Heart left ventricle (tissue), 16 donors: ENCODE measurements at regions of chr9 and their contacts with region 1.

Region 1: DNA sequence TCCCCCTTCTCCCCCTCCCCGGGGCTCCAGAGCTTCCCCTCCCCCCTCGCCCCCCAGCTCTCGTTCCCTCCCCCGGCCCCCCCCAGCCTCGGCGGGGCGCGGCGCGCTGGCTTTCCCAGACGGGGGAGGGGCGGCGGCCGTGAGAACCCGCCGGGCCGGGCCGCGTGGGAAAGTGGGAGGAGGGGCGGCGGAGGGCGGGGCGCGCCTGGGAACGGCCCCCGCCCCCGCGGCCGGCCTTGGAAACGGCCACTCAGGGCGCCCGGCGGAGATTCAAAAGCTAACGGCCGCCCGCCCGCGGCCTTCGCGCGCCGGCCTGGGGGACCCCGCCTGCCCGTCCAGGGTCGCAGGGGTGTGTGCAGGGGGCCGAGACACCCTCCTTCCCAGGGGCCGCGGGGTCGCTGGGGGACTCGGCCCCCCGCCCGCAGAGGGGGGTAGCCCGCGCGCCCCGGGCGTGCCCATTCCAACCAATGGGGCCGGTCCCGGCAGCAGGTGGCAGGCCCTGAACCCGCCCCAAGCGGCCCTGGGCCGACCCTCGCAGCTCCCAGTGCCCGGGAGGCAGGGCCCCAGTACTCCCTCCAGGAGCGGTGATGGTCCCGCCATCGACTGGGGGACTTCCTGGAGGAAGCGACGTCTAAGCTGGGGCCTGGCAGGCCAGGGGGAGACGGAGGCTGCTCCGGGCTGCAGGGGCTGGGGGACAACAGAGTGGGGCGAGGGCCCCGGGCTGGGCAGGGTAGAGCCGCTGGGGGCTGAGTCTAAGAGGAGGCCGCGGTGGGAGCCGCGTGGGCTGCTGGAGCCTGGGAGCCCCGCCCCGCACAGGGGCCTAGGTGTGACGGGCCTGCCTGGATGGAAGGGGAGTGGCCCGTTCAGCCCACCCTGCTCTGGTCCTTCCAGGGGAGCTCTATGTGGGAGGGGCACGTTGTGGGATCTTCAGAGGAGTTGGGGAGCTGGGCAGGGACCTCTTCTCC is 14.2 kb upstream of the NRARP start:
- DNase-seq: peak; percentile 56 to 83 (median 81)
- ATAC-seq: peak in 2 of 4 donors; percentile 31 to 52
- H3K4me3 ChIP-seq: peak overlapping the region; percentile 20 to 53 (median 46)
- H3K27ac ChIP-seq: peak overlapping the region; percentile 25 to 97 (median 75)
- H3K4me1 ChIP-seq: peaks cover 3 to 78% (median 42%) of the 10 kb centered on the region in 12 donors
- H3K27me3 ChIP-seq: peaks cover 0 to 21% (median 6%) of the 10 kb centered on the region in 9 donors
- CTCF ChIP-seq: no peak
- POLR2A ChIP-seq: no peak

Region 2: DNA sequence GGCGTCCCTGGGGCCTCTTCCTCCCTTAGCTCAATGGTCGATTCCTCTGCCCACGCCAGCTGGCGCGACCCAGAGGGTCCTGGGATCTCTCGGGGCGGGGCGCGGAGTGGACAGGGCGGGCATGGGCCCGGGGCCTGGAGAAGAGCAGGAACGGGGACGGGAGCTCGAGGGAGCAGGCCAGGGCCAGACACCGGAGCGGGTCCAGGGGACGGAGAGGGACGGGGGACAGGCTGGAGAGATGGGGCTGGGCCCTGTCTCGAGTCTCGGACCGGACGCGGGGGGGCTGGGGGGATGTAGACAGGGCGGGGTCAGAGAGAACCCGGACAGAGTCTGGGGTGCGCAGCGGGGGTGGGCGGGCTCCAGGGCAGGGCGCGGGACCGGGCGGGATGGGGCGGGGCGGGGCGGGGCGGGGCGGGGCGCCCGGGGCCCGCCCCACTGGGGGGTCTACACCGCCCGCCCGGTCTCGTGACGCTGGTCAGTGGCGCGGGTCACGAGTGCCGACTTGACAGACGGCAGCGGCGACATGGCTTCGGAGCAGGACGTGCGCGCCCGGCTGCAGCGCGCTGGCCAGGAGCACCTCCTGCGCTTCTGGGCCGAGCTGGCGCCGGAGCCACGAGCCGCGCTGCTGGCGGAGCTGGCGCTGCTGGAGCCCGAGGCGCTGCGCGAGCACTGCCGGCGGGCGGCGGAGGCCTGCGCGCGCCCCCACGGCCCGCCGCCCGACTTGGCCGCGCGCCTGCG is 239.1 kb before region 1 on chr9 and contains the start of gene UAP1L1:
- intact Hi-C with region 1: no loop called
- DNase-seq: peak; percentile 78 to 93 (median 85)
- ATAC-seq: peak; percentile 40 to 74 (median 64)
- H3K4me3 ChIP-seq: peak within 1 kb of the TSS; percentile 57 to 85 (median 70)
- H3K27ac ChIP-seq: peak within 1 kb of the TSS in 11 of 12 donors; percentile 18 to 83 (median 59)
- H3K4me1 ChIP-seq: peaks cover 0 to 46% (median 11%) of the 10 kb centered on the region in 12 donors
- H3K27me3 ChIP-seq: no peaks in the 10 kb centered on the region
- CTCF ChIP-seq: no peak
- POLR2A ChIP-seq: peak in 1 of 2 donors; percentile 45
- total RNA-seq, gene UAP1L1: 5.9 to 15.1 (median 9.4) TPM

Region 3: GRCh38 chr9:137302176-137302994 is 13.9 kb before region 1 on chr9 and contains the start of gene NRARP:
- intact Hi-C with region 1: loop called in 1 of 10 experiments (anchors 2 kb)
- DNase-seq: peak; percentile 92 to 96 (median 94)
- ATAC-seq: peak; percentile 47 to 77 (median 67)
- H3K4me3 ChIP-seq: peak within 1 kb of the TSS; percentile 48 to 94 (median 68)
- H3K27ac ChIP-seq: peak within 1 kb of the TSS; percentile 63 to 98 (median 88)
- H3K4me1 ChIP-seq: peaks cover 12 to 91% (median 52%) of the 10 kb centered on the region in 12 donors
- H3K27me3 ChIP-seq: peaks cover 0 to 62% (median 6%) of the 10 kb centered on the region in 9 donors
- CTCF ChIP-seq: peak; percentile 30 to 69 (median 51)
- POLR2A ChIP-seq: peak; percentile 25 to 91
- total RNA-seq, gene NRARP: 6.4 to 15.8 (median 10.3) TPM

Region 4: GRCh38 chr9:137370865-137371520 is 54.7 kb after region 1 on chr9:
- intact Hi-C with region 1: no loop called
- DNase-seq: peak in 1 of 5 donors; percentile 18
- ATAC-seq: no peak
- H3K4me3 ChIP-seq: no peak overlapping the region
- H3K27ac ChIP-seq: no peak overlapping the region
- H3K4me1 ChIP-seq: peaks cover 0 to 15% (median 5%) of the 10 kb centered on the region in 12 donors
- H3K27me3 ChIP-seq: no peaks in the 10 kb centered on the region
- CTCF ChIP-seq: no peak
- POLR2A ChIP-seq: no peak